K562 (cell line): ENCODE measurements at regions of chr17 and their contacts with region 1.

Region 1: DNA sequence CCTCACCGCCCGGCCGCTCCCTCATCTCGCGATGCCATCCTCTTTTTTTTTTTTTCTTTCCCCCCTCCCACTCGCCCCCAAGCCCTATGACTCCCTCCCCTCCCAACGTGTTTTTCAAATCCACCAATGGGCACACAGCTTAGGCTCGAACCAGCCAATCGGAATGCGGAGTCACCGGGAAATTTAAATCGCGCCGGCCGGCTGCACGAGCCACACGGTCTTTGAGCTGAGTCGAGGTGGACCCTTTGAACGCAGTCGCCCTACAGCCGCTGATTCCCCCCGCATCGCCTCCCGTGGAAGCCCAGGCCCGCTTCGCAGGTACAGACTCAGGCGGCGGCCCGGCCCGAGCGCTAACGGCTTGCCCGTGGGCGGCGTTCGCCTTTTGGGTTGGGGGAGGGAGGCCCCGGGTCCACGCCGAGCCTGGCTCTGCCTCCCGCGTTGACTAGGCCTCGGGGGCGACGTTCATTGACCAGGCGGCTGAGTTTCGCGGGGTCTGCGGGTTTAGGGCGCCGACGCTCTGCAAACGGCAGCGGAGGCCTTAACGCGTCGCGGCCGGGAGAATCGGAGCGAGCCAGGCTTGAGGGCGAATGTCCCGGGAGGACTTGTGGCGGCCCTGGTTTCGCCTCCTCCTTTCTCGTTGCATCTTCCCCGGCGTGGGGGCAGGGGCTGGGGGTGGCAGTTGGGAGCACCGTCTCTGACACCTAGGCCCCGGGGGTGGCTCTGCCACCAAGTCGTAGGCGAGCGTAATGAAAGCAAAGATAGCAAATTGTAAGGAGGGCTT is at the start of gene KPNA2:
- DNase-seq: peak; percentile 97 to 98 (median 97)
- ATAC-seq: peak; percentile 95
- H3K4me3 ChIP-seq: peak within 1 kb of the TSS; percentile 69
- H3K27ac ChIP-seq: peak within 1 kb of the TSS; percentile 89
- H3K4me1 ChIP-seq: peaks cover 0 to 9% of the 10 kb centered on the region in 2 experiments; a peak in 3 of 5 replicates
- H3K27me3 ChIP-seq: no peaks in the 10 kb centered on the region
- CTCF ChIP-seq: no peak
- EP300 ChIP-seq: no peak
- POLR2A ChIP-seq: peak; percentile 98
- RAD21 ChIP-seq: no peak
- polyA plus RNA-seq, gene KPNA2: 594 to 984 TPM

Region 2: GRCh38 chr17:67733371-67733940 is 302.3 kb before region 1 on chr17:
- CTCF ChIA-PET with region 1: no interaction called
- POLR2A ChIA-PET with region 1: no interaction called
- in situ Hi-C with region 1: no loop called
- intact Hi-C with region 1: no loop called
- DNase-seq: no peak
- ATAC-seq: no peak
- H3K4me3 ChIP-seq: no peak overlapping the region
- H3K27ac ChIP-seq: no peak overlapping the region
- H3K4me1 ChIP-seq: no peaks in the 10 kb centered on the region
- H3K27me3 ChIP-seq: no peaks in the 10 kb centered on the region
- CTCF ChIP-seq: no peak
- EP300 ChIP-seq: no peak
- POLR2A ChIP-seq: no peak
- RAD21 ChIP-seq: no peak

Region 3: GRCh38 chr17:68019675-68020408 is 15.9 kb before region 1 on chr17:
- CTCF ChIA-PET with region 1: no interaction called
- POLR2A ChIA-PET with region 1: interaction called, 18 read pairs
- in situ Hi-C with region 1: no loop called
- intact Hi-C with region 1: no loop called
- DNase-seq: peak; percentile 92 to 98 (median 94)
- ATAC-seq: peak; percentile 97
- H3K4me3 ChIP-seq: peak overlapping the region; percentile 58
- H3K27ac ChIP-seq: peak overlapping the region; percentile 95
- H3K4me1 ChIP-seq: peaks cover 12% of the 10 kb centered on the region in 2 experiments; a peak in 4 of 5 replicates
- H3K27me3 ChIP-seq: no peaks in the 10 kb centered on the region
- CTCF ChIP-seq: peak; percentile 46 to 62 (median 50); a peak in 5 of 6 replicates
- EP300 ChIP-seq: peak; percentile 85
- POLR2A ChIP-seq: peak; percentile 91
- RAD21 ChIP-seq: peak in 1 of 2 experiments; percentile 9; a peak in 1 of 4 replicates

Region 4: GRCh38 chr17:68048996-68049395 is 13.3 kb after region 1 on chr17:
- CTCF ChIA-PET with region 1: no interaction called
- POLR2A ChIA-PET with region 1: interaction called, 22 read pairs
- in situ Hi-C with region 1: no loop called
- intact Hi-C with region 1: no loop called
- DNase-seq: peak; percentile 23 to 39 (median 25)
- ATAC-seq: peak; percentile 64
- H3K4me3 ChIP-seq: no peak overlapping the region
- H3K27ac ChIP-seq: no peak overlapping the region
- H3K4me1 ChIP-seq: no peaks in the 10 kb centered on the region; a peak in 3 of 5 replicates
- H3K27me3 ChIP-seq: no peaks in the 10 kb centered on the region
- CTCF ChIP-seq: no peak
- EP300 ChIP-seq: no peak
- POLR2A ChIP-seq: no peak
- RAD21 ChIP-seq: no peak

Region 5: DNA sequence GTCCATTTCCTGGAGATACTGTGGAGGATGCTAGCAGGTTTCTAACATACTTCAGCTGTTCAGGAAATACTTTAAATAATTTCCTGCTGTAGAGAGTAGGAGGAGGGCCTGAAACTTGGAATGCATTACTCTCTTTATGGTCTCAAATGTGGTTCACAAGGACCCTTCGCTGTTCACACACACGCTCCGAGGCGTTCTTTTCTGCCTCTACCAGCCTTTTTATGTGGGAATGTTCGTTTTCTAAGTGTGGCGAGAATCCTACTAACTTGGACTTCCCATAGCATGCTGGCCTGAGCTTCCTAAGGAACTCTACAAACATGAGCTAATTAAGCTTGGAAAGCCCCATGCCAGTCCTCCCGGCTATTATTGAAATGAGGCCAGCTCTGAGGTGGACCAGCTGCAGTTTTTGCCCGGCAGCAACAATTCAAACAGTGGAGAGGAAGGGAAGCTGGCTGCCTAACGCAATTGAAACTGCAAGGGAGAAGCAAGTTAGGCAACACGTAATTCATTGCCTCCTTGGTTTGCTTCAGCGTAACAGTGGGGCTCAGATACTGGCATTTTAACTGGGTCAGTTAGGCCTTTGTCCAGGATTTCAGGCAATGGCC is 18.7 kb after region 1 on chr17:
- CTCF ChIA-PET with region 1: no interaction called
- POLR2A ChIA-PET with region 1: interaction called, 22 read pairs
- in situ Hi-C with region 1: no loop called
- intact Hi-C with region 1: no loop called
- DNase-seq: no peak
- ATAC-seq: no peak
- H3K4me3 ChIP-seq: no peak overlapping the region
- H3K27ac ChIP-seq: no peak overlapping the region
- H3K4me1 ChIP-seq: no peaks in the 10 kb centered on the region; a peak in 3 of 5 replicates
- H3K27me3 ChIP-seq: no peaks in the 10 kb centered on the region
- CTCF ChIP-seq: no peak
- EP300 ChIP-seq: no peak
- POLR2A ChIP-seq: no peak
- RAD21 ChIP-seq: no peak